ENCODE measurements at regions of chr13 and their contacts with region 1.

Region 1: GRCh38 chr13:72781451-72782439 is at the starts of genes DIS3 and PIBF1:
- DNase-seq: peak; percentile 98
- H3K4me3 ChIP-seq: peak within 1 kb of the TSS; percentile 82 to 95 (median 94)
- H3K27ac ChIP-seq: peak within 1 kb of the TSS; percentile 87 to 92 (median 88)
- H3K4me1 ChIP-seq: peaks cover 0 to 41% (median 32%) of the 10 kb centered on the region in 4 donors
- H3K27me3 ChIP-seq: no peaks in the 10 kb centered on the region
- CTCF ChIP-seq: no peak
- EP300 ChIP-seq: peak in 2 of 4 donors; percentile 6 to 20
- POLR2A ChIP-seq: peak; percentile 38 to 66
- total RNA-seq, gene DIS3: 13.6 to 24.5 (median 19.5) TPM
- total RNA-seq, gene PIBF1: 17.7 to 24.0 (median 20.9) TPM

Region 2: GRCh38 chr13:72727417-72728289 is 54.1 kb before region 1 on chr13 and contains the starts of genes BORA and MZT1:
- intact Hi-C with region 1: loop called (anchors 2 kb)
- DNase-seq: peak; percentile 97
- H3K4me3 ChIP-seq: peak within 1 kb of the TSS; percentile 80 to 97 (median 90)
- H3K27ac ChIP-seq: peak within 1 kb of the TSS; percentile 73 to 76 (median 76)
- H3K4me1 ChIP-seq: peaks cover 0 to 23% (median 20%) of the 10 kb centered on the region in 4 donors
- H3K27me3 ChIP-seq: no peaks in the 10 kb centered on the region
- CTCF ChIP-seq: no peak
- EP300 ChIP-seq: no peak
- POLR2A ChIP-seq: peak in 1 of 2 donors; percentile 9
- total RNA-seq, gene BORA: 1.4 to 5.6 (median 2.6) TPM
- total RNA-seq, gene MZT1: 4.2 to 12.8 (median 8.2) TPM